Caco-2 (cell line): ENCODE measurements at regions of chr3 and their contacts with region 1.

Region 1: DNA sequence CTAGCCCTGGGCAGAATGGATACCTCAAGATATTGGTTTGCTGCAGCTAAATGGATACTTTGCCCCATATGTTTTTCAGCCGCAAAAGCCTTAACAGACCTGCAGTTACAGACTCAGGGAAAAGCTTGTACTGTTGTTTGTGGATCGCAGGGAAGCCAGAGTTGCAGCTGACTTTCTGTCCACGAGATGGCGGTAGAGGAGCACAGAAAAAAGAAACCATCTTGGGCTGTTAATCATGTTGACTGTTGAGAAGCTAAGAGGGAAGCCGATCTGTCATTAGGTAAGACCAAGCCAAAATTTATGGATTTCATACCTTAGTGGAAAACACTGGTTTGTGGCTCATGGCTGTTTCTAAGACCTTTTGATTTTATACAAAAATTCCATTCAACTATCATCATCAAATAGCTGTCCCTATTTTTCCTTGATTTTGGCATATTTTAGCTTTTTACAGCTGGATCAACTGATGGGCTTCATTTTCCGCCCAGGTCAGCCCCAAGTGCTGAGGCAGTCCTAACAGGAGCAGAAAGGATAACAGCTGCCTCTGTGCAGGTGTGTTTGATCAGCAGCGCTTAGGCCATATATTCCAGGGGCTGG is 205.7 kb upstream of the ZPLD1 start:
- DNase-seq: peak; percentile 63 to 77
- H3K4me3 ChIP-seq: no peak overlapping the region
- H3K4me3 Mint-ChIP-seq: no peak overlapping the region
- H3K27ac Mint-ChIP-seq: no peak overlapping the region
- H3K4me1 ChIP-seq: no peaks in the 10 kb centered on the region
- H3K4me1 Mint-ChIP-seq: no peaks in the 10 kb centered on the region
- H3K27me3 ChIP-seq: no peaks in the 10 kb centered on the region
- H3K27me3 Mint-ChIP-seq: peaks cover 4% of the 10 kb centered on the region
- CTCF ChIP-seq: peak; percentile 83 to 88

Region 2: GRCh38 chr3:101695779-101696372 is 533.3 kb before region 1 on chr3:
- CTCF ChIA-PET with region 1: no interaction called
- POLR2A ChIA-PET with region 1: no interaction called
- intact Hi-C with region 1: loop called (anchors 2 kb)
- DNase-seq: peak in 1 of 2 experiments; percentile 66
- H3K4me3 ChIP-seq: no peak overlapping the region
- H3K4me3 Mint-ChIP-seq: no peak overlapping the region
- H3K27ac Mint-ChIP-seq: no peak overlapping the region
- H3K4me1 ChIP-seq: peaks cover 10% of the 10 kb centered on the region; the same call in 1 of the 2 replicates
- H3K4me1 Mint-ChIP-seq: peaks cover 15% of the 10 kb centered on the region
- H3K27me3 ChIP-seq: no peaks in the 10 kb centered on the region
- H3K27me3 Mint-ChIP-seq: no peaks in the 10 kb centered on the region
- CTCF ChIP-seq: peak; percentile 47 to 80

Region 3: GRCh38 chr3:101809178-101810021 is 419.8 kb before region 1 on chr3:
- CTCF ChIA-PET with region 1: interaction called, 46 read pairs
- POLR2A ChIA-PET with region 1: no interaction called
- intact Hi-C with region 1: loop called (anchors 1 kb)
- DNase-seq: peak in 1 of 2 experiments; percentile 42
- H3K4me3 ChIP-seq: no peak overlapping the region
- H3K4me3 Mint-ChIP-seq: no peak overlapping the region
- H3K27ac Mint-ChIP-seq: no peak overlapping the region
- H3K4me1 ChIP-seq: peaks cover 11% of the 10 kb centered on the region; the same call in 1 of the 2 replicates
- H3K4me1 Mint-ChIP-seq: no peaks in the 10 kb centered on the region
- H3K27me3 ChIP-seq: no peaks in the 10 kb centered on the region
- H3K27me3 Mint-ChIP-seq: no peaks in the 10 kb centered on the region
- CTCF ChIP-seq: peak; percentile 62 to 64

Region 4: DNA sequence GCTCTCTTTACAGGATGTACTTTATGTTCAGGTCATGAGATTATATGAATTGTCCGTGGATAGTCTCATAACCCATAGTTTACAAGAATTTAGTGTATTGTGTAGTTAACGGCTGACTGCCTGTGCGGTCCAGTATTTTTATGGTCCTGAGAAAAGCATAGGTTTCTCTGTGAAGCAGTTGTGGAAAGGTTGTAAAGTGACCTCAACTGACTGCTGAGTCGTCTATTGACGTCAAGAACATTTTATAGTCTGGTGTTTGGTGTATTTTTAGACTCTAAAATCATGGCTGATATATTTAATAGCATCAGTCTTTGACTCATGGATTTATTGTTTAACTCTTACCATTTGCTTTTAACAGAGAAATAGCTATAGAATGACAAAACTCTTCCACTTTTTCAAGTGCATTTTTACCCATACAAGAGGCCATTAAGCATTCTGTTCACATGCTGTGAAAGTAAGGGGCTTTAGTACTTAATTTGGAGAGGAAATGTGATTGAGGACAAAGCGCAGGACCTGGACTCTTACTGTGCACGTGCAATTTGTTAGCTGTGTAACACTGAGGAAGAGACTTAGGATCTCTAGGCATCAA is 139.2 kb before region 1 on chr3:
- CTCF ChIA-PET with region 1: no interaction called
- POLR2A ChIA-PET with region 1: no interaction called
- intact Hi-C with region 1: loop called (anchors 5 kb)
- DNase-seq: no peak
- H3K4me3 ChIP-seq: no peak overlapping the region
- H3K4me3 Mint-ChIP-seq: no peak overlapping the region
- H3K27ac Mint-ChIP-seq: no peak overlapping the region
- H3K4me1 ChIP-seq: peaks cover 19% of the 10 kb centered on the region
- H3K4me1 Mint-ChIP-seq: no peaks in the 10 kb centered on the region
- H3K27me3 ChIP-seq: no peaks in the 10 kb centered on the region
- H3K27me3 Mint-ChIP-seq: no peaks in the 10 kb centered on the region
- CTCF ChIP-seq: no peak

Region 5: DNA sequence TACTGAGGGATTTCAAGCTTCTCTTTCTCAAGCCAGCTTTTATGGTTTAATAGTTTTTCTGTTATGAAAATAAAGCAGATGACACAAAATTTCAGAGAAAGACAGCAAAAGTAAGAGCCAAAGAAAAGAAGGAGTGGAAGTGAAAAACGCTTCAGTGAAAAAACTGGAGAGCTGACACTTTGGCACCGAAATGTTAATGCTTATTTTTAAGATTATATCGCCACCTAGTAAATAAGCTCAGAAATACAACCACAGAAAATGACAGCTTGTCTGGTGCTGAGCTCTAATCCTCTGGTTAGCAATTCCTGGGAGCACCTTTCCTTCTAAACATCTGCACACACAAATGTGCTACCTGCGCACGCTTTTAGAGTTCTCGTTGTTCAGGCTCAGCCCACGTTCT is 307.3 kb after region 1 on chr3:
- CTCF ChIA-PET with region 1: interaction called, 51 read pairs
- POLR2A ChIA-PET with region 1: no interaction called
- intact Hi-C with region 1: loop called (anchors 1 kb)
- DNase-seq: peak in 1 of 2 experiments; percentile 17
- H3K4me3 ChIP-seq: no peak overlapping the region
- H3K4me3 Mint-ChIP-seq: no peak overlapping the region
- H3K27ac Mint-ChIP-seq: no peak overlapping the region
- H3K4me1 ChIP-seq: no peaks in the 10 kb centered on the region
- H3K4me1 Mint-ChIP-seq: no peaks in the 10 kb centered on the region
- H3K27me3 ChIP-seq: no peaks in the 10 kb centered on the region
- H3K27me3 Mint-ChIP-seq: peaks cover 3% of the 10 kb centered on the region
- CTCF ChIP-seq: peak; percentile 21 to 35

Region 6: GRCh38 chr3:102745882-102746281 is 516.7 kb after region 1 on chr3:
- CTCF ChIA-PET with region 1: no interaction called
- POLR2A ChIA-PET with region 1: no interaction called
- intact Hi-C with region 1: loop called (anchors 5 kb)
- DNase-seq: no peak
- H3K4me3 ChIP-seq: no peak overlapping the region
- H3K4me3 Mint-ChIP-seq: no peak overlapping the region
- H3K27ac Mint-ChIP-seq: no peak overlapping the region
- H3K4me1 ChIP-seq: no peaks in the 10 kb centered on the region
- H3K4me1 Mint-ChIP-seq: no peaks in the 10 kb centered on the region
- H3K27me3 ChIP-seq: no peaks in the 10 kb centered on the region
- H3K27me3 Mint-ChIP-seq: no peaks in the 10 kb centered on the region
- CTCF ChIP-seq: peak; percentile 10 to 11